Thyroid gland (tissue), 4 donors: ENCODE measurements at regions of chr7 and their contacts with region 1.

Region 1: DNA sequence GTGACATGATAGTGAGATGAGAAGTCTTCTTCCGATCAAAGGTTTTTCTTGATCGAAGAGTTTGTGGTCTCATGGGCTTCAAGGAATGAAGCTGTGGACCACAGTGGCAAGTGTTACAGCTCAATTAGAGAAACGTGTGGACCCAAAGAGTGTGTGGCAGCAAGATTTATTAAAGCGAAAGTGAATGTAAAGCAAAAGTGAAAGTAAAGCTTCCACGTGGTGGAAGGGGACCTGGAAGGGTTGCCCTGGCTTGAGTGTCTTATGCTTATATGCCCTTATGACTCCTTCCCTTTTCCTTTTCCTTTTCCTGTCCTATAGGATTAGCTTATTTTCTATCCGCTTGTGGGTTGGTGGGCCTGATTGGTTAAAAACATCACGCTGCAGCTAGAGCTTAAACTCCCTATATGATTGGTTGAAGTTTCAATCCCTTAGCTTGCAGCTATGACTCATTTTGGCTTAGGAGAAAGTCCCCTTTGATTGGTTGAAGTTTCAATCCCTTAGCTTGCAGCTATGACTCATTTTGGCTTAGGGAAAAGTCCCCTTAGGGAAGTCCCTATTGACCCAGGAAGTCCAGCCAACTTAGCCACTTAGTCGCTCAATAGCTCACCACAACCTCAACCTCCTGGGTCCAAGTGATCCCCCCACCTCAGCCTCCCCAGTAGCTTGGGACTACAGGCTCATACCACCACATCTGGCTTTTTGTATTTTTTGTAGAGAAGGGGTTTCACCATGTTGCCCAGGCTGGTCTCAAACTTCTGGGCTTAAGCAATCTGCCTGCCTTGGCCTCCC is 34.7 kb downstream of the MRPS24 start:
- DNase-seq: no peak
- H3K4me3 ChIP-seq: no peak overlapping the region
- H3K27ac ChIP-seq: no peak overlapping the region
- H3K4me1 ChIP-seq: no peaks in the 10 kb centered on the region
- H3K27me3 ChIP-seq: no peaks in the 10 kb centered on the region
- CTCF ChIP-seq: no peak
- POLR2A ChIP-seq: no peak

Region 2: DNA sequence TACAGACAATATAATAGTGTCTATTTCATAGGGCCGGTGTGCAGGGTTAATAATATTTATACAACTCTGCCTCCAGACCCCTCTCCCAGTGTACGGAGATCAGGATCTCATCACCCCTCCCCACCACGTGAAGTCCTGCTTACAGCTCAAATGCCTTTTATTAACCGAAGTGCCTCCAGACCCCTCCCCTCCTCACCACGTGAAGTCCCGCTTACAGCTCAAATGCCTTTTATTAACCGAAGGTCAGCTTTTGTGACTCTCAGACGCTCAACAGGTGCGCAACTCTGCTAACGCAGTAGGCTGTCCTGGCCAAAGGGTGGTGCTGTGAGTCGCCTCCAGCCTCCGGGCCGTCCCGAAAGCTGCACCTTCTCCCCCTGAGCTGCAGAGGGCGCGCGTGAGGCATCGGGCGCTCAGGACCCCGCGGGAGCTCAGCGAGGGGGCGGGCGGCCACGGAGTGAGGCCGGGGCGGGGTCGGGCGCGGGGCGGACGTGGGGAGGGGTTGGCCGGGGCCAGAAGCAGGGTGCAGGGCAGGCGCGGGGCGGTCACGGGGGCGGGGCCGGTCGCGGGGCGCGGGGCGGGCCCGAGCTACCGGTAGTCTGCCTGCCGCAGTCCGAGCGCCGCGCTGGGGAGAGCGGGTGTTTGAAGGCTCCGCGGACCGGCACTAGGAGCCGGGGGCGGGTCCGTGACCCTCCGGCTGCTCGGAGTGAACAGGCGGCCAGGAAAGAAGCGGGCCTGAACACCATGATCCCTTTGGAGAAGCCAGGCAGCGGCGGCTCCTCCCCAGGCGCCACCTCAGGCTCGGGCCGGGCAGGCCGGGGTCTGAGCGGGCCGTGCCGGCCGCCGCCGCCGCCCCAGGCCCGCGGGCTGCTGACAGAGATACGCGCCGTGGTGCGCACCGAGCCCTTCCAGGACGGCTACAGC is 251.9 kb before region 1 on chr7 and contains the start of gene STK17A:
- intact Hi-C with region 1: loop called (anchors 5 kb)
- DNase-seq: peak; percentile 90 to 93
- H3K4me3 ChIP-seq: peak within 1 kb of the TSS; percentile 60 to 95 (median 91)
- H3K27ac ChIP-seq: peak within 1 kb of the TSS; percentile 78 to 93 (median 82)
- H3K4me1 ChIP-seq: peaks cover 11 to 15% of the 10 kb centered on the region in 2 donors
- H3K27me3 ChIP-seq: no peaks in the 10 kb centered on the region
- CTCF ChIP-seq: peak; percentile 94 to 100 (median 100)
- POLR2A ChIP-seq: peak; percentile 16 to 85
- total RNA-seq, gene STK17A: 7.9 to 22.9 (median 16.4) TPM

Region 3: DNA sequence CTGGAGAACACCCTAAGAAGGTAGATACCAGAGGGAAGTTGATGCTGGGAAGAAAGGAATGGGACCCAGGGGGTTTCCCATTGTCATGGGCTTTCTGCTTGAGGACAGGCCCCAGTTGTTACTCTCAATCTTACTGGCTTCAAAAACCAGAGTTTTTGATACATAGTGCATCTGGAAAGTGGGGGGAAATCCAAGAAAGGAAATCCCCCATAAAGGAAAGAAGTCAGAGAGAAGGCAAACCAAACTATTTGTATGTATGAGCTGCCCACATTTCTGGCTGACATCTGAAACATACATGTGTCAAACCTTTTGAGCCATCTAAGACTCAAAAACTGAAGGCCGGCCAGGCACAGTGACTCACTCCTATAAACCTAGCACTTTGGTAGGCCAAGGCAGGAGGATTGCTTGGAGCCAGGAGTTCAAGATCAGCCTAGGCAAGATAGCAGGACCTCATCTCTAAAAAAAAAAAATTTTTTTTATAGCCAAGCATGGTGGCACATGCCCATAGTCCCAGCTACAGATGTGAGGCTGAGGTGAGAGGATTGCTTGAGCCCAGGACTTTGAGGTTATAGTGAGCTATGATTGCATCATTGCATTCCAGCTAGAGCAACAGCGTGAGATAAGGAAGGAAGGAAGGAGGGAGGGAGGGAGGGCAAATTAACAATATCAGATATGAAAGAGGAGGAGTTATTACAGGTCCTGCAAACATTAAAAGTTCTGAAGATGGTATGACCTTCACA is 98.7 kb before region 1 on chr7:
- intact Hi-C with region 1: loop called (anchors 10 kb)
- DNase-seq: no peak
- H3K4me3 ChIP-seq: no peak overlapping the region
- H3K27ac ChIP-seq: no peak overlapping the region
- H3K4me1 ChIP-seq: no peaks in the 10 kb centered on the region
- H3K27me3 ChIP-seq: no peaks in the 10 kb centered on the region
- CTCF ChIP-seq: no peak
- POLR2A ChIP-seq: no peak